ENCODE measurements at regions of chr6 and their contacts with region 1.

Region 1: DNA sequence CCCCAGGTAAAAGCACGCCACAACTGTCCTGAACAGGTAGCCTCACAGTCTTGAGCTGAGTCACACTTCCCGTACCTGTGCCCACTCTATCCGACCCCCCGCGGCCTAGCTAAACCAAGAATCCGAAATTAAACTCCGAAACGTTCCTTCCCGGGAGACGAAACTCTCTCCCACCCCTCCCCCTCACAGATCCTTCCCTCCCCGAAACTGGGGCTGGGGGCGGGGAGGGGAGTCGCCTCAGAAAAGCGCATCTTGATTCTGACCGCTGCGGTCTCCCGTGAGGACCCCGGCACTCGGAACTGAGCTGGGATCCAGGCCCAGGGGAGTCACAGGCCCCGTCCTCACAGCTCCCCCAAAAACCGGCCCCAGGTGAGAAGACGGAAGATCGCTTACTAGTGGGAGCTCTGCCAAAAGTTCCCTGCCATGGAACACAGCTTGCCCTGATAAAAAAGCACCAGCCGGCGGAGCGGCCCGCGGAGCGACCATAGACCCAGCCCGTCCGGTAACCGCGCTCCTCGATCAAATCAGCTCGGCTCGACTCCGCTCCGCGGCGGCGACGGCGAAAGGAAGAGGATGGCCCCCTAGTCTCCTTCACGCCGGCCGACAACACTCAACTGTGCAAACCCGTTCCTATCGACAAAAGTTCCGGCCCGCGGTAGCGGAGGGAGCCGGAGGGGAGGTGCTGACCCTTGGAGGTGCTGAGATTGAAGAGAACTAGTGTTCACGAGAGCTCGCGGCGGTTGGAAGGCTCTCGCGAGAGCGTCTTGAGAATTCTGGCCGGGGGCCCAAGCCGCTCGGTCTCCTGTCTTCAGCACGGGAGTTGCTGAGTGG is at the start of gene CCNC:
- DNase-seq: peak; percentile 76 to 90 (median 85)
- H3K4me3 ChIP-seq: peak within 1 kb of the TSS; percentile 85
- H3K4me3 Mint-ChIP-seq: peak within 1 kb of the TSS; percentile 95 to 100 (median 98)
- H3K27ac ChIP-seq: peak within 1 kb of the TSS; percentile 83
- H3K27ac Mint-ChIP-seq: peak within 1 kb of the TSS; percentile 76 to 100 (median 94)
- H3K4me1 ChIP-seq: peaks cover 15% of the 10 kb centered on the region
- H3K4me1 Mint-ChIP-seq: peaks cover 39 to 57% (median 53%) of the 10 kb centered on the region in 3 donors
- H3K27me3 ChIP-seq: no peaks in the 10 kb centered on the region
- H3K27me3 Mint-ChIP-seq: no peaks in the 10 kb centered on the region
- total RNA-seq, gene CCNC: 62.5 to 64.8 TPM

Region 2: GRCh38 chr6:99520855-99521632 is 47.3 kb before region 1 on chr6:
- CTCF ChIA-PET with region 1: interaction called, 10 read pairs
- POLR2A ChIA-PET with region 1: interaction called, 7 read pairs
- DNase-seq: peak; percentile 53 to 82 (median 69)
- H3K4me3 ChIP-seq: peak overlapping the region; percentile 81
- H3K4me3 Mint-ChIP-seq: peak overlapping the region; percentile 91 to 99 (median 98)
- H3K27ac ChIP-seq: peak overlapping the region; percentile 74
- H3K27ac Mint-ChIP-seq: peak overlapping the region; percentile 58 to 98 (median 96)
- H3K4me1 ChIP-seq: peaks cover 14% of the 10 kb centered on the region
- H3K4me1 Mint-ChIP-seq: peaks cover 26 to 51% (median 47%) of the 10 kb centered on the region in 3 donors
- H3K27me3 ChIP-seq: no peaks in the 10 kb centered on the region
- H3K27me3 Mint-ChIP-seq: no peaks in the 10 kb centered on the region

Region 3: DNA sequence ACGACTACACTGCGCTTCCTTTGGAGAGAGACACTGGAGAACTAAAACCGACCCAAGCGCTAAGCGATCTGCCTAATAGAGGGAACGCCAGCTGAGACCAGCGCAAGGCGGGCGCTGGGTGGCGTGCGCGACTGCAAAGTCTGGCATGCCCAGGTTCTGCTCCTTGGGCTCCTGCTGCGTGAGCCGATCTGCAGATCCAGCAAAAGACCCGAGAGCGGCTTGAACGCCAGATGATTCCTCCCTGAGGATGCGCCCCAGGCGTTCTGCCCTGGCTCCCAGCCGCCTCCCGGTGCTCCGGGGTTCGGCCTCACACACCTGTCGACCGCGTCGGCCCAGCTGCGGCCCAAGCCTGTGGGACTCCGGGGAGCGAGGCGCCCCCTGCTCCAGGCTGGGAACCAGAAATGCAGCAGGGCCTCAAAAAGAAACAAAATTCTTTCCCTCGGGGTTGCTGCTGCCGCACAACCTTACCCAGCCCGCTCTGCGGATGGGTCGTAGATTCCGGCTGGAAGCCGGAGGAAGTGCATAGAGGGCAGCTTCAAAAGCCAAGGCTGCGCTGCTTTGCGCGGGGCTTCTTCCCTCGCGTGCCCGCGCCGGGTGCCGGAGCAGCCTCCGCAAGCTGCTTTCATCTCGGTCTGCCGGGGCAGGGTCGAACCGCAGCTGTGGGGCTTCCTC is 20.4 kb after region 1 on chr6:
- CTCF ChIA-PET with region 1: interaction called, 16 read pairs
- POLR2A ChIA-PET with region 1: interaction called, 4 read pairs
- DNase-seq: peak; percentile 36 to 74 (median 50)
- H3K4me3 ChIP-seq: peak overlapping the region; percentile 64
- H3K4me3 Mint-ChIP-seq: peak overlapping the region; percentile 65 to 93 (median 88)
- H3K27ac ChIP-seq: no peak overlapping the region
- H3K27ac Mint-ChIP-seq: peak overlapping the region in 5 of 8 donors; percentile 12 to 63 (median 38)
- H3K4me1 ChIP-seq: peaks cover 23% of the 10 kb centered on the region
- H3K4me1 Mint-ChIP-seq: peaks cover 35 to 53% (median 41%) of the 10 kb centered on the region in 3 donors
- H3K27me3 ChIP-seq: peaks cover 46% of the 10 kb centered on the region
- H3K27me3 Mint-ChIP-seq: peaks cover 48 to 73% of the 10 kb centered on the region in 2 donors